Dorsolateral prefrontal cortex (tissue), 120 donors: ENCODE measurements at regions of chr19 and their contacts with region 1.

Region 1: GRCh38 chr19:38335949-38336637 is 463 bp downstream of the CATSPERG start:
- DNase-seq: peak; percentile 83 to 98 (median 94)
- H3K4me3 ChIP-seq: peak overlapping the region; percentile 57 to 91 (median 78)
- H3K27ac ChIP-seq: peak overlapping the region; percentile 72 to 99 (median 94)
- H3K27me3 ChIP-seq: no peaks in the 10 kb centered on the region
- CTCF ChIP-seq: peak in 10 of 56 donors; percentile 3 to 24 (median 13)

Region 2: GRCh38 chr19:38142176-38143035 is 193.7 kb before region 1 on chr19:
- intact Hi-C with region 1: loop called (anchors 2 to 5 kb)
- DNase-seq: peak; percentile 45 to 88 (median 82)
- H3K4me3 ChIP-seq: no peak overlapping the region
- H3K27ac ChIP-seq: peak overlapping the region in 56 of 59 donors; percentile 39 to 95 (median 71)
- H3K27me3 ChIP-seq: no peaks in the 10 kb centered on the region
- CTCF ChIP-seq: peak; percentile 30 to 92 (median 79)

Region 3: GRCh38 chr19:38229585-38230073 is 106.5 kb before region 1 on chr19:
- intact Hi-C with region 1: loop called (anchors 1 to 2 kb)
- DNase-seq: peak; percentile 89 to 97 (median 96)
- H3K4me3 ChIP-seq: peak overlapping the region; percentile 51 to 80 (median 67)
- H3K27ac ChIP-seq: peak overlapping the region in 50 of 59 donors; percentile 13 to 91 (median 74)
- H3K27me3 ChIP-seq: peaks cover 0 to 5% (median 0%) of the 10 kb centered on the region in 45 donors
- CTCF ChIP-seq: peak in 47 of 56 donors; percentile 18 to 68 (median 41)

Region 4: GRCh38 chr19:38245826-38246498 is 90.1 kb before region 1 on chr19:
- intact Hi-C with region 1: loop called in 1 of 2 experiments (anchors 1 kb)
- DNase-seq: no peak
- H3K4me3 ChIP-seq: peak overlapping the region in 1 of 59 donors; percentile 5
- H3K27ac ChIP-seq: peak overlapping the region in 56 of 59 donors; percentile 2 to 100 (median 98)
- H3K27me3 ChIP-seq: no peaks in the 10 kb centered on the region
- CTCF ChIP-seq: no peak

Region 5: DNA sequence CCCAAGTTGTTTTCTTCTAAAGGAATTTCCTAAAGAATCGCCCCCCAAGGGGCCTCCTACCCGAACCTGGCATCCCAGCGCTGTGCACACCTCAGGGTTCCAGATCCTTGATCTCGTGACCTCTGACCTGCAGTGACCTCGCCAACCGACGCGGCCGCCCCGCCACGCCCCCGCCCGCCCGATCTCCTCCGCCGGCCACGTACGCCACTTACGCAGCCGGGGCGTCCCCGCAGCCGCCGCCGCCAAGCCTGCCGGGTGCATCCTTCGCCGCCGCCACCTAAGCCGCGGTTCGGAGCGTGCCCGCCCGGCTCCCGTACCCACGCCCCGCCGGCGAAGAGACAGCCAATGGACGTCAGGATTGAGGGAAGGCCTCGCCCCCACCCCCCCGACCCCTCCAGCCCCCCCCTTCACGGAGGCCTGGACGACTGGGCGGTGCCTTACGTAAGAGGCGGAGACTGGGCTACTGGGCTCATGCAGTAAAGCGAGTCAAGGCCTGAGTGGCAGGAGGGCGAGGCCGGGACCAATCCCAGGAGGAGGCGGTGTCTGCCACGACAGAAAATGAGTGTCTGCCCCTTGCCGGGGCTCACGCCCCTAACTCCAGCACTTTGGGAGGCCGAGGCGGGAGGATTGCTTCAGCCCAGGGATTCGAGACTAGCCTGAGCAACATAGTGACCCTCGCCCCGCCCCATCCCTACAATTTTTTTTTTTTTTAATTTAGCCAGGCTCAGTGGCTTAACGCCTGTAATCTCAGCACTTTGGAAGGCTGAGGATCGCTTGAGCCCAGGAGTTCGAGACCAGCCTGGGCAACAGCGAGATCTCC is 20.2 kb before region 1 on chr19 and contains the start of gene YIF1B:
- intact Hi-C with region 1: loop called (anchors 1 kb)
- DNase-seq: peak; percentile 88 to 99 (median 98)
- H3K4me3 ChIP-seq: peak within 1 kb of the TSS; percentile 58 to 94 (median 81)
- H3K27ac ChIP-seq: peak within 1 kb of the TSS; percentile 53 to 96 (median 90)
- H3K27me3 ChIP-seq: no peaks in the 10 kb centered on the region
- CTCF ChIP-seq: peak in 30 of 56 donors; percentile 5 to 56 (median 28)
- total RNA-seq, gene YIF1B: 31.5 to 70.0 (median 48.6) TPM

Region 6: DNA sequence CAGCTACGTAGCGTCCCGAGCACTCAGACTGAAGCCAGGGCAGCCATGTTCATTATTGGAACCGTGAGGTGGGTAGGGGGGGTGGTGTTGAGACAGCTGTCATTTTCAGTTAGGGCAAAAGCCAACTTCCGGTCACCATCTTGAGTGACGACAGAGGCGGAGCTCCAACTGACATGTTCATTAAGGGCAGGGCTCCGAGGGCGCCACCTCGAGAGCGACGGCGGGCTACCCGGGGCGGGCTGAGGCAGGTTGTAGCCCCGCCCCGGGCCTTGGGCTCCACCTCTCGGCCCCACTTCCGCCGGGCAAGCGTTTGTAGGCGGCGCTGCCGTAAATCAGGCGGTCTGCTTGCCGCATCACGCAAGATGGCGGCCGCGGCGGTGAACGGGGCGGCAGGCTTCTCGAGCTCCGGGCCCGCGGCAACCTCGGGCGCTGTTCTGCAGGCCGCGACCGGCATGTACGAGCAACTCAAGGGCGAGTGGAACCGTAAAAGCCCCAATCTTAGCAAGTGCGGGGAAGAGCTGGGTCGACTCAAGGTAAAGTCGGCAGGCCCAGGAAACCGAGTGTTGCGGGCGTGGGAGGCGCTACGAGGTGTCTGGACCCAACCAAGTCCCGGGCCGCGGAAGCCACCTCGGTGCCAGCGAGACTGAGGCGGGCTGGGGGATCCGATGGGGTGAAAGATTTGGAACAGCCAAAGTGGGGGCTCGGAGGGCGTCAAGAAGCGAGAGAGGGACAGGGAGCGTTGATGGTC is 38.5 kb after region 1 on chr19 and contains the start of gene PSMD8:
- intact Hi-C with region 1: loop called (anchors 1 kb)
- DNase-seq: peak; percentile 99 to 100 (median 100)
- H3K4me3 ChIP-seq: peak within 1 kb of the TSS; percentile 63 to 99 (median 93)
- H3K27ac ChIP-seq: peak within 1 kb of the TSS; percentile 66 to 97 (median 90)
- H3K27me3 ChIP-seq: no peaks in the 10 kb centered on the region
- CTCF ChIP-seq: peak in 55 of 56 donors; percentile 17 to 87 (median 55)
- total RNA-seq, gene PSMD8: 65.8 to 185 (median 140) TPM